Sigmoid colon (tissue), 7 donors: ENCODE measurements at regions of chrX and their contacts with region 1.

Region 1: DNA sequence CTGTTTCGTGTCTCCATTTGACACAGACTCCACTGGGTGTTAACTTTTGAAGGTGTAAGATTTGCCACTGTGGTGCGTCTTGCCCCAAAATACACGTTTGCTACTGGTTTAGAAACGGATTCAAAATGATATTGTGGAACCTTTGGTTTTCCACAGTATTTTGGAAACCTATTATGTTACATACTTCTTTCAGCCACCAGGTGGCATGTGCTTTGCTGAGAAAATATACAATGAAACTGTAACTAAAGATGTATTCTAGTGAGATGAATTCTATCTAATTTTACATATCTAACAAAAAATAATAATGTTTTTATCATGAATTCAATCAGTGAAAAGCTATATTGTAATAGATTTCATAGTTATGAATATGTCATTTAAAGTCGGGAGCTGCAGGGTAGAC is 28.4 kb upstream of the SLITRK4 start:
- DNase-seq: no peak
- H3K4me3 ChIP-seq: no peak overlapping the region
- H3K27ac ChIP-seq: no peak overlapping the region
- H3K4me1 ChIP-seq: no peaks in the 10 kb centered on the region
- H3K27me3 ChIP-seq: no peaks in the 10 kb centered on the region
- CTCF ChIP-seq: peak in 2 of 4 experiments; percentile 7 to 48
- EP300 ChIP-seq: no peak
- POLR2A ChIP-seq: no peak

Region 2: DNA sequence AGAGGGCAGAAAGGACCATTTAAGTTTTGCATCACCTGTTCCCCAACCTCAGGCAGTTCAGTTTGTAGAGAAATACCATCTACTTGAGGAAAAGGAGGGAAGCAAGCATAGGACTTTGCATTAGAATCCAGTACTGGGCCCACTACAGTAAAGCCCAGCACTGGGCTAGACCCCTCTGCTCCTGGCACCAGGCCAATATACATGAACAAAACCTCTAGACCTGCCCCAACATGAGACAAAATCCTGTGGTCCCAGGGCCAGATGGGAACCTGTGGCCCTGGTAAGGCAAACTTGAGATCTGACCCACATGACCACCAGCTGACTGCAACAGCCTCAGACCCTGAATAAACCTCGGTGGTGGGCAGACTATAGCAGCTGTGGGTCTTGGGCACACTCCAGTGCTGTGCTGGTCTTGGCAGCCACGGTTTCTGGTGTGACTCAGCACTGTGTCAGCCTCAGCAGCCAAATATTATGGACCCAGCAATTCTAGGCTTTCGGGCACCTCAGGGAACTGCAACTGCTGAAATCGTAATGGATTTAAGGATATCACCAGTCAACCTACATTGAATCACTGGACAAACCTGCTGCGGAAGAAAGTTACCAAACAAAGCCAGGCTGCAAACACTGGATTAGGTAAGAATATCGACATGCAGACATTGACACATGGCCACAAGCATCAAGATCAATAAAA is 208.9 kb after region 1 on chrX:
- intact Hi-C with region 1: no loop called
- DNase-seq: no peak
- H3K4me3 ChIP-seq: no peak overlapping the region
- H3K27ac ChIP-seq: no peak overlapping the region
- H3K4me1 ChIP-seq: no peaks in the 10 kb centered on the region
- H3K27me3 ChIP-seq: no peaks in the 10 kb centered on the region
- CTCF ChIP-seq: no peak
- EP300 ChIP-seq: no peak
- POLR2A ChIP-seq: no peak

Region 3: GRCh38 chrX:145190801-145191389 is 1526.6 kb after region 1 on chrX:
- intact Hi-C with region 1: loop called (anchors 10 kb)
- DNase-seq: no peak
- H3K4me3 ChIP-seq: no peak overlapping the region
- H3K27ac ChIP-seq: no peak overlapping the region
- H3K4me1 ChIP-seq: no peaks in the 10 kb centered on the region
- H3K27me3 ChIP-seq: no peaks in the 10 kb centered on the region
- CTCF ChIP-seq: no peak
- EP300 ChIP-seq: no peak
- POLR2A ChIP-seq: no peak